OCI-LY7 (cell line): ENCODE measurements at regions of chr12 and their contacts with region 1.

Region 1: DNA sequence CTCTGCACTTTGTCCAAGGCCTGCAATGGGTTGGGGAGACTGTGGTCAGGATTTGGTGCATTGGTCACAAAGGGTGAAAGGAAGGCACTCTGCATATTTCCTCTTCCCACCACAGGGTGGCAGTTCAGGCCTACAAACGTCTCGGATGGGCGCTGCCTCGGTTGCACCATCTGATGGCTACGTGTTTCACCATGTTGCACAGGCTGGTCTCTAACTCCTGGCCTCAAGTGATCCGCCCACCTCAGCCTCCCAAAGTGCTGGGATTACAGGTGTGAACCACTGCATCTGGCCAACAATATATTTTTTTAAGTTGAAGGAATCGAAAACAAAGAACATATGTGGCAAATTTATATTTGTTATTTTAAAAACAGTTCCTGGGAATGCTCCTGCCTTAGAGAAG is 35.1 kb downstream of the TMBIM6 start:
- DNase-seq: peak; percentile 87
- H3K4me3 ChIP-seq: no peak overlapping the region
- H3K27ac ChIP-seq: no peak overlapping the region
- H3K4me1 ChIP-seq: peaks cover 8% of the 10 kb centered on the region
- CTCF ChIP-seq: peak; percentile 92

Region 2: GRCh38 chr12:49636979-49637755 is 139.2 kb before region 1 on chr12:
- CTCF ChIA-PET with region 1: interaction called, 5 read pairs
- POLR2A ChIA-PET with region 1: no interaction called
- intact Hi-C with region 1: loop called (anchors 5 kb)
- DNase-seq: peak; percentile 84
- H3K4me3 ChIP-seq: no peak overlapping the region
- H3K27ac ChIP-seq: no peak overlapping the region
- H3K4me1 ChIP-seq: peaks cover 14% of the 10 kb centered on the region
- CTCF ChIP-seq: peak; percentile 85

Region 3: GRCh38 chr12:49707128-49707811 is 69.1 kb before region 1 on chr12 and contains the start of gene FMNL3:
- CTCF ChIA-PET with region 1: no interaction called
- POLR2A ChIA-PET with region 1: no interaction called
- intact Hi-C with region 1: no loop called
- DNase-seq: peak; percentile 98
- H3K4me3 ChIP-seq: peak within 1 kb of the TSS; percentile 90
- H3K27ac ChIP-seq: peak within 1 kb of the TSS; percentile 50
- H3K4me1 ChIP-seq: peaks cover 40% of the 10 kb centered on the region
- CTCF ChIP-seq: peak; percentile 97
- total RNA-seq, gene FMNL3: 28.7 and 29.6 TPM in 2 replicates

Region 4: DNA sequence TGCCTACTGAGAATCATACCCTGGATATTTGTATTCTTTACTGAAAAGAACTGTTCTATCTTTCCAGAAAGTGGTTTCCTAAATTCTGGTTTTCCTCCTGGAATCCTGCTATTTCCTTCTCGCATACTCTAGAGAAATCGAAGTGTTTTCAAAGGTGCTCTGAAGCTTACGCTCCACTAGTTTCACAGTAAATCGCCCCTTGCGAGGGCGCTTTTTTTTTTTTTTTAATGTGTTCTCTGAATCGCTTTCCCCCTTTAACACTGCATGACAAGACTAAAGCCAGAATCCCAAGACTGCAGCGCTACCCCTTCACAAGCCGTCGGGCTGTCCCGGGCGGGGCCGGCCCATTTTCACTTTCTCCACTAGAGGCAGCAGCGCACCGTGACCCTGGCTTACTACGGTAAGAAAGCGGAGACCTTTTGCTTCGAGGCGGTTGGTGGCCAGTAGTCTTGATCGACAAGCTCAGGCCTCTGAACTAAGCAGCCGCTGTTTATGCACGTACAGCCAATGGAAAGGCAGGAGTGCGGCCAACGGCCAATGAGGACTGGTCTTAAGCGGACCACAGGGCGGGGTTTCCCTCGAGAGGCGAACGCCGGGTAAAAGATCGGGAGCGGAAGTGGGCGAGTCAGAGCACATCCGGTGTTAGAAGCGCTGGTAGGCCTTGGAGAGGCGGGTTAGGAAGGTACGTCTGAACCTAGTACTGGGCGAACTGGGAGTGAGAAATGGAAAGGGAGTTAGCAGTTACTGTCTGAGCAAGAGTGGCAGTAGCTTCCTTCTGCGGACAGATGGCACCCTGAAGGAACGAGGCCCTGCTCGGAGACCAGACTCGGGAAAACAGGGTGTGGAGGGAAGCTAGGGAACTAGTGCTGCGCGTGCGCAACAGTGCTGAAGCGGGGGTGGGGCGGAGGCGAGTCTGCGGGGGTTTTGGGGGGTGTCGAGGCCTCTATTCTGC is 35.2 kb before region 1 on chr12 and contains the start of gene TMBIM6:
- CTCF ChIA-PET with region 1: interaction called, 10 read pairs
- POLR2A ChIA-PET with region 1: interaction called, 4 read pairs
- intact Hi-C with region 1: loop called (anchors 2 kb)
- DNase-seq: peak; percentile 100
- H3K4me3 ChIP-seq: peak within 1 kb of the TSS; percentile 79
- H3K27ac ChIP-seq: peak within 1 kb of the TSS; percentile 86
- H3K4me1 ChIP-seq: peaks cover 26% of the 10 kb centered on the region
- CTCF ChIP-seq: peak; percentile 97
- total RNA-seq, gene TMBIM6: 116 and 120 TPM in 2 replicates

Region 5: DNA sequence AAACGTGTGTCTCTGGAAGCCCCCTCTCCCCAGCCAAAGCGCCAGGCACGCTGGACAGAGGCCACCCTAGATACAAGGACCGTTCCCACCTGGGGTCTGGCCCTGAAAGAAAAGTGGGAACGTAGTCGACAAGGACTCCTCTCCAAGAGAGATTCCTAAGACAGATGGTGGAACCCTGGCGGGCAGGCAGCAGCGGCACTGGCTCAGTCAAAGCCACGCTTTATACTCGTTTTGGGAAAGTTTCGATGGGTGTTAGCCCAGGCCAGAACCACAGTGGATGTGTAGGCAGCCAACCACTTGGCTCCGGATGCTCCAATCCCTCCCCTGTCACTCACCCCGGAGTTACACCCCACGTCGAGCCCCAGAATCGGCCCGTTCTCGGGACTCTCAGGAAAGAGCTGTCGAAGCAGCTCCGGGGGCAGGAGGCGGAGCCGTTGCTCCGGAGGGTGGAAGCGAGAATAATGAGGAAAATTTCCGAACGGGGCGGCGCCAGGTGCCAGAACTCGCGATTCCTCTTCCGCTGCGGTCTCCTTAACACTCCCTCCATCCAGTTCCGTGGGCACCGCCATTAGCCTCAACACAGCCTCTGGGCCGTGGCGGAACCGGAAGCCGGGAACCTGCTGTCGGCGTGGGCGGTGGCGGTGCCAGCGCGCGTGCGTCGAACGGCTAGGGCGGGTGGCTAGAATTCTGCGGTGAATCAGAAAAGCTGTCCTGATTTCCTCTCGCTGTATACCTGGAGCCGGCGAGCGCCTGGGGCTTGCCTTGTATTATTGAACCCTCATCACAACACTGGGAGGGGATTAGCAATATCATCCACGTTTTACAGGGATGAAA is 66.3 kb after region 1 on chr12 and contains the start of gene BCDIN3D:
- CTCF ChIA-PET with region 1: interaction called, 8 read pairs
- POLR2A ChIA-PET with region 1: interaction called, 3 read pairs
- intact Hi-C with region 1: loop called (anchors 1 kb)
- DNase-seq: peak; percentile 89
- H3K4me3 ChIP-seq: peak within 1 kb of the TSS; percentile 92
- H3K27ac ChIP-seq: peak within 1 kb of the TSS; percentile 74
- H3K4me1 ChIP-seq: peaks cover 34% of the 10 kb centered on the region
- CTCF ChIP-seq: no peak
- total RNA-seq, gene BCDIN3D: 7.5 and 8.4 TPM in 2 replicates

Region 6: DNA sequence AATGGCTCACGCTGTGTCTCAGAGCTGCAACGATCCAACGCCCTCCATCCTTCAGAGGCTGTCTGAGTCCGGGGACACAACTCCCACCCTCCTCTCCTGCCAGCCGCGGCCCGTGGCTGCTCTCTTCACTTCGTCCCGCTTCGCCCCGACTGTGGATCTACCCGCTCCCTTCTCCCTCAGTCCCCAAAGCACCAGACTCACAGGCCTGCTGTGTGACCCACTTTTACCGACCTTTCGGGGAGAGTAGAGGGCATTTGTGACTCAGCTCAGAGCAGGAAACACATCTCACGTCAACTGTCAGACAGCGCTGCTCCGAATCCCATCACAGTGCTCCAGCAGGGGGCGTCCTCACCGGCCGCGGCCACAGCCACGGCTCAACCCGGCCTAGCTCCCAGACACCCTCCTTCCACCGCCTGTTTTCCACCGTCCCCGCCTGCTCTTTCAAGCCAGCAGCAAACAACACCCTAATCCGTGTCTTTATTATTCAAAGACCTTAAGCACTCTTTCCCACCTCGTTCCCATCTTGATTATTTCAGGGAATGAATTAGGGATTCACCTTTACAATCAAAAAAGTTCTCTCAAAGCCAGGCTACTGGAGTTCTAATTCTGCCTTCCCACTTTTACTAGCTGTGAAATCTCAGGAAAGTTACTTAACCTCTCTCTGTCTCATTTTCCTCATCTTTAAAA is 169.1 kb after region 1 on chr12:
- CTCF ChIA-PET with region 1: no interaction called
- POLR2A ChIA-PET with region 1: no interaction called
- intact Hi-C with region 1: loop called (anchors 2 kb)
- DNase-seq: peak; percentile 75
- H3K4me3 ChIP-seq: peak overlapping the region; percentile 24
- H3K27ac ChIP-seq: no peak overlapping the region
- H3K4me1 ChIP-seq: peaks cover 20% of the 10 kb centered on the region
- CTCF ChIP-seq: peak; percentile 88

Region 7: DNA sequence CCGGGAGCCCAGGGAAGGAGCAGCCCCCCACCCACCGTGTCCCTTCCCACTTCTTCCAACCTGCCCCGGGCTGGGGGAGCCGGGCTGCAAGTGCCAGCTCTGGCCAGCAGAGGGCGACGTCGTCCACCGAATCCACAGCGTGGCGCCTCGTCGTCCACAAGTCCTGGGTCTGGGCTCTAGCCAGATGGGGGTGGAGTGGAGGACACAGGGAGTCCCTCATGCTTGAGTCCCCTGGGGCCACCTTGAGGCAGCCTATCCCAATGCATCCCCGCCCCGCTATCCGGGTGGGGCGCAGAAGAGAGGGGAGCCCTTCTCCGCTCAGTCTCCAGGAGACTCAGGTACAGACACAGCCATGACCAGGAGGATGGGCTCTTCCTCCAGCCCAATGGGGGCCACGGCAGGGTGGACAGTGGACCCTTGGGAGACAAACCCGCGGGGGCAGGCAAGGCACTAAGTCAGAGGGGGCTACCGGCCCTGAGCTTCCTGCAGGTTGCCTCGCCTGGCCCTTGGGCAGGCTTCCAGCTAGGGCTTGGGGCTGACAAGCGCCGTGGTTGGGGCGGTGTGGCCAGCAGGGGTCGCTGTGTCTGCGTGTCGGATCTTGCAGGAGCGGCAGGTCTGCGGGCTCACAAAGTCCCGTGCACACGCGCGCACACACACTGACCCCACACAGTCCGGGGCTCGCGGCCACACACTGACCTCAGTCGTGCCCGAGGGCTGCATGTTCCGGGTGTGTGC is 190.8 kb after region 1 on chr12:
- CTCF ChIA-PET with region 1: interaction called, 4 read pairs
- POLR2A ChIA-PET with region 1: no interaction called
- intact Hi-C with region 1: loop called (anchors 1 kb)
- DNase-seq: peak; percentile 86
- H3K4me3 ChIP-seq: peak overlapping the region; percentile 61
- H3K27ac ChIP-seq: no peak overlapping the region
- H3K4me1 ChIP-seq: peaks cover 9% of the 10 kb centered on the region
- CTCF ChIP-seq: peak; percentile 90

Region 8: GRCh38 chr12:50055831-50056638 is 279.6 kb after region 1 on chr12:
- CTCF ChIA-PET with region 1: no interaction called
- POLR2A ChIA-PET with region 1: no interaction called
- intact Hi-C with region 1: loop called (anchors 5 kb)
- DNase-seq: peak; percentile 71
- H3K4me3 ChIP-seq: peak overlapping the region; percentile 22
- H3K27ac ChIP-seq: no peak overlapping the region
- H3K4me1 ChIP-seq: peaks cover 17% of the 10 kb centered on the region
- CTCF ChIP-seq: peak; percentile 100

Region 9: DNA sequence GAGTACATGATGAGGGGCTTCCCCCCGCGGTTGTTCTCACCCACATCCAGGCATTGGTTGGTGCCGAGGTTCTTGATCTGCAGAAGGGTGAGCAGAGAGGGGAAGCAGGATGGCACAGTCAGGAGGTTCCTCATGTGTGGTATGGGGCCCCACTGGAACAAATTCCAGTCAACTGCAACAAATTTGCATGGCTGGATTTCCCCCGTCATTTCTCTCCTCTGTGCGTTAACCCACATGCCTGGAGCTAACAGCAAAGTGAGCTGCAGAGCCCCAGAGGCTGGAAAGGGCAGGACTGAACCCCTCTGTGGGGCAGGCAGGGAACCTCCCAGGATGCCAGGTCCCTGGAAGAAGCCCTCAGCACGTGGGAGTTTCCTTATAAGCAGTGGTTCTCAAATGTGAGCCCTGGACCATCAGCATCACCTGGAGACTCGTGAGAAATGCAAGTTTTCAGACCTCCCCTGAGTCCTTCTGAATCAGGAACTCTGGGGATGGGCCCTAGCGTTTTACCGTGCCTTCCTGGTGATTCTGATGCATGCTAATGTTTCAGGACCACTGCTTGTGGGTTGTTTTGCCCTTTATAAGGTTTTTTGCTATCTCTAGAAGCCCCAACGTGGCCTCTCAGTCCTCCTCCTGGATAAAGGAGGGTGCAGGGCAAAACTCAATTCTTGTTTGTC is 1581.1 kb after region 1 on chr12:
- CTCF ChIA-PET with region 1: no interaction called
- POLR2A ChIA-PET with region 1: no interaction called
- intact Hi-C with region 1: no loop called
- DNase-seq: peak; percentile 18
- H3K4me3 ChIP-seq: no peak overlapping the region
- H3K27ac ChIP-seq: no peak overlapping the region
- H3K4me1 ChIP-seq: peaks cover 13% of the 10 kb centered on the region
- CTCF ChIP-seq: no peak